CD4-positive, alpha-beta memory T cell (primary cell): ENCODE measurements at regions of chr2 and their contacts with region 1.

Region 1: DNA sequence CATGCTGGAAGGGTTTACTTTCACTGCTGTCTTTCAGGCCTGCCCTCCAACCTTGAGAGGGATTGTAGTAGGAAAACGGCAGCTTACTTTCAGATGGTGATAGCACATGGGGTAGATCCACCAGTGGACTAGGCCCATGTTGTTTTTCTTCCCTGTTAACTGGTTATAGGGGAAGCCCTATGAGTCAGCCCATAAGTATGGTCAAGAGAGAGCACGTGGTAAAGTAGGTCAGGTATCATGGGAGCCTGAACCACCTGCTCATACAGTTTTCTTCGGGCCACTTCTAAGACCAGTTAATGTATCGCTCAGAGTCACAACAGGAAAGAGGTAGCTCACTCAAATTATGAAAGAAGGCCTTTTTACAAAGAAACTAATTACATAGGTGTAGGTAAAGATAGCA is 33.0 kb downstream of the PDK1 start:
- DNase-seq: no peak
- H3K4me3 ChIP-seq: no peak overlapping the region
- H3K4me3 Mint-ChIP-seq: no peak overlapping the region
- H3K27ac ChIP-seq: no peak overlapping the region
- H3K27ac Mint-ChIP-seq: no peak overlapping the region
- H3K4me1 ChIP-seq: peaks cover 7% of the 10 kb centered on the region
- H3K4me1 Mint-ChIP-seq: peaks cover 11 to 25% (median 18%) of the 10 kb centered on the region in 4 donors
- H3K27me3 ChIP-seq: no peaks in the 10 kb centered on the region
- H3K27me3 Mint-ChIP-seq: no peaks in the 10 kb centered on the region

Region 2: GRCh38 chr2:171852366-171852888 is 736.5 kb before region 1 on chr2:
- CTCF ChIA-PET with region 1: no interaction called
- POLR2A ChIA-PET with region 1: no interaction called
- intact Hi-C with region 1: no loop called
- DNase-seq: no peak
- H3K4me3 ChIP-seq: no peak overlapping the region
- H3K4me3 Mint-ChIP-seq: no peak overlapping the region
- H3K27ac ChIP-seq: no peak overlapping the region
- H3K27ac Mint-ChIP-seq: no peak overlapping the region
- H3K4me1 ChIP-seq: no peaks in the 10 kb centered on the region
- H3K4me1 Mint-ChIP-seq: peaks cover 0 to 1% (median 0%) of the 10 kb centered on the region in 4 donors
- H3K27me3 ChIP-seq: no peaks in the 10 kb centered on the region
- H3K27me3 Mint-ChIP-seq: no peaks in the 10 kb centered on the region

Region 3: GRCh38 chr2:172606285-172606684 is 17.4 kb after region 1 on chr2:
- CTCF ChIA-PET with region 1: interaction called, 11 read pairs
- POLR2A ChIA-PET with region 1: no interaction called
- intact Hi-C with region 1: no loop called
- DNase-seq: no peak
- H3K4me3 ChIP-seq: no peak overlapping the region
- H3K4me3 Mint-ChIP-seq: no peak overlapping the region
- H3K27ac ChIP-seq: no peak overlapping the region
- H3K27ac Mint-ChIP-seq: no peak overlapping the region
- H3K4me1 ChIP-seq: no peaks in the 10 kb centered on the region
- H3K4me1 Mint-ChIP-seq: no peaks in the 10 kb centered on the region
- H3K27me3 ChIP-seq: no peaks in the 10 kb centered on the region
- H3K27me3 Mint-ChIP-seq: no peaks in the 10 kb centered on the region

Region 4: DNA sequence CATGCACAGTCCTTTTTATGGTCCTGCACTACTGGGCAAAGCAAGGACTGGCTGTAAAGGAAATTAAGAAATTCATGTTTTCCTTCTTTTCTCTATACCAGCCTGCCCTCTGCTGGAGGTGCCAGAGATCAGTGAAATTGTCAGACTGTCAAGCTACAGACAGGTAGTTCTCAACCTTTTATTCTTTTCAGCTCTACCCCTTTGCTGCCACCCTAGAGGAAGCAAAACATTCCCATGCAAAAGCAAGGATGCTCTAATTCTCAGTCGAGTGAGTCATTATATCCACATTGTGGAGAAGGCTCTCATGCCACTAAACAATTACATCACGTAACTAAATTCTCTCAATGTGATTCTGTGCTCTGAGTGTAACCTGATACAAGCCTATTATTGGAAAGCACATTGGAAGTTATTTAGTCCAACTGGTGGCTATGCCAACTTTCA is 121.7 kb after region 1 on chr2:
- CTCF ChIA-PET with region 1: interaction called, 3 read pairs
- POLR2A ChIA-PET with region 1: no interaction called
- intact Hi-C with region 1: loop called (anchors 5 kb)
- DNase-seq: peak in 4 of 5 donors; percentile 11 to 31 (median 22)
- H3K4me3 ChIP-seq: no peak overlapping the region
- H3K4me3 Mint-ChIP-seq: no peak overlapping the region
- H3K27ac ChIP-seq: no peak overlapping the region
- H3K27ac Mint-ChIP-seq: no peak overlapping the region
- H3K4me1 ChIP-seq: no peaks in the 10 kb centered on the region
- H3K4me1 Mint-ChIP-seq: no peaks in the 10 kb centered on the region
- H3K27me3 ChIP-seq: no peaks in the 10 kb centered on the region
- H3K27me3 Mint-ChIP-seq: peaks cover 11 to 19% of the 10 kb centered on the region in 2 donors